ENCODE measurements at regions of chr12 and their contacts with region 1.

Region 1: GRCh38 chr12:107317751-107318613 is 224.6 kb upstream of the CRY1 start:
- DNase-seq: peak; percentile 93
- ATAC-seq: peak; percentile 66
- H3K4me3 Mint-ChIP-seq: peak overlapping the region; percentile 86
- H3K27ac Mint-ChIP-seq: no peak overlapping the region
- H3K4me1 Mint-ChIP-seq: peaks cover 27% of the 10 kb centered on the region
- H3K27me3 Mint-ChIP-seq: peaks cover 2% of the 10 kb centered on the region

Region 2: DNA sequence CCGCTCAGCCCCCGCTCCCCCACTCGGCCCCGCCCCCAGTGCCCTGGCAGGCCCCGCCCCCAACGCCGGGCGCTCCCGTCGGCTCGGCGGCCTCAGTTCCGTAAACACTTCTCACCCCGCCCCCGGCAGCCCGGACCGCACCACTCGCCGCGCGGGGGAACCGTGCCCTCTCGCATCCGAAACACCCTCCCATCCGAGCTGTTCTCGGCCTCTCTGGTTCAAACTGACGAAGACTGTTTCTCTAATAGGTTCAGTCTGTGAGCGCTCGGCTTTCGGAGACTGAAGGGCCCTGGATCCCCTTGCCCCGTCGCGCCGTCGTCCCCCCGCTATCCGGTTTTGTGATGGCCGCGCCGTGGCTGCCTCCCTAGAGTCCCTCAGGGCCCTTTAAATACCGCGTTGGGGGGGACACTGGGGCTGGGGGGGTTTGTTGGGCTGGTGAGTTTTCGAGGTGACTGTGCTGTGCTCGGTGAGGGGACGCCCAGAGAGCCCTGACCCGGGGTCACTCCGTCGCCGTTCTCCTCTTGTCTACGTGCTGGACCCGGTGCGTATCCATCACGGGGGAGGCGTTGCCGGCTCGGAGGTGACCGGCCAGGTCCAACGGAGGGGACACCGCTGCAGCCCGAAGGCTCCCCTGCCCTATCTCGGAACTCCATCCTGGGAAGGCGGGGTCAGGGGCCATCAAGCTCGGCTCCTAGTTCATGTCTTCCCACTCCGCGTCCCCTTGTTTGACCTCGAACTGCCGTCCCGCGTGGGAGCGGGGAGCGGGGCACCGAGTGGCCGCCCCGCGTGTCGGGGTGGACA is 1015.4 kb before region 1 on chr12 and contains the start of gene TCP11L2:
- CTCF ChIA-PET with region 1: no interaction called
- POLR2A ChIA-PET with region 1: no interaction called
- intact Hi-C with region 1: loop called in 1 of 2 experiments (anchors 2 kb)
- DNase-seq: peak; percentile 94
- ATAC-seq: peak; percentile 67
- H3K4me3 Mint-ChIP-seq: peak within 1 kb of the TSS; percentile 78
- H3K27ac Mint-ChIP-seq: peak within 1 kb of the TSS; percentile 99
- H3K4me1 Mint-ChIP-seq: peaks cover 59% of the 10 kb centered on the region
- H3K27me3 Mint-ChIP-seq: no peaks in the 10 kb centered on the region
- total RNA-seq, gene TCP11L2: 8.6 to 11.8 TPM

Region 3: DNA sequence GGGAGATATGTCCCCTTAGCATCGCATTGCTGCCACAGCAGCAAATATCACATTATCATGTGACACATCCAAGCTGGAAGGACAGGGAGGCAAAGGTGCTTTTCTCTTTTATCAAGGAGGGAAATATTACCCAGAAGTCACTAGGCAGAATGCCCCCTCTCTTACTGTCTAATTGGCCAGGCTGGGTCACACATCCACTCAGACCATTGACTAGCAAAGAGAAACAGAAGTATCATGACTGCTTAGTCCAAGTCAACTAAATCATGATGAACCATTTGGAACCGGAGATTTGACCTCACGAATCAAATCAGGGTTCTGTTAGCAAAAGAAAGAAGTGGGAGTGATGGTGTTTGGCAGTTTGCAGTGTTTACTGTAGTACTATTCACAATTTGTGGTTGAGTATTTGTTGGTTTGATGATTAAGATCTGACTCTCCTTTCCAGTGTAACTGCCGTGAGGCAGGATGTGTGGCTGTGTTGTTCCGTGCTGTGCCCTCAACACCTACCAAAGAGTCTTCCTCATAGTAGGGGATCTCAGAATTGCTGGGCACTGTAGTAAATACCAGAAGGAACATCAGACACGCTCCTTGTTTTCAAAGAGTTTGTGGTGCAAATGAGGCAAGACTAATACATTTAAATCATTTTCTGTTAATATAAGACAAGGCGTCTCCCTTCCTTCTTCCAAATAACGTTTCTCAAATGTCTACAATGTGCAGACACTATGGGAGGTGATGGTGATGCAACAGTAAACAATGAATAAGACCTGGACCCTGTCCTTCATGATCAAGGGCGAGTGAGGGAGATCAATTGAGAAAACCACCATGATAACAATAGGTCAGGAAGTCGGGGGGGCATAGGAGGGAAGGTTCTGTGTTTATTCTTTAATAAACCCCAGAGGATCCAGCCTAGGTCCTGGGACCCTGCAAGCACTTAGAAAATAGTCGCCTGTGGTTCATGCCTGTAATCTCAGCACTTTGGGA is 30.3 kb before region 1 on chr12:
- CTCF ChIA-PET with region 1: no interaction called
- POLR2A ChIA-PET with region 1: no interaction called
- intact Hi-C with region 1: loop called (anchors 2 kb)
- DNase-seq: peak; percentile 65
- ATAC-seq: peak; percentile 97
- H3K4me3 Mint-ChIP-seq: no peak overlapping the region
- H3K27ac Mint-ChIP-seq: peak overlapping the region; percentile 61
- H3K4me1 Mint-ChIP-seq: peaks cover 8% of the 10 kb centered on the region
- H3K27me3 Mint-ChIP-seq: no peaks in the 10 kb centered on the region

Region 4: GRCh38 chr12:107352347-107353081 is 34.5 kb after region 1 on chr12:
- CTCF ChIA-PET with region 1: interaction called, 5 read pairs
- POLR2A ChIA-PET with region 1: no interaction called
- intact Hi-C with region 1: loop called in 1 of 2 experiments (anchors 1 kb)
- DNase-seq: peak; percentile 56
- ATAC-seq: peak; percentile 83
- H3K4me3 Mint-ChIP-seq: peak overlapping the region; percentile 45
- H3K27ac Mint-ChIP-seq: peak overlapping the region; percentile 79
- H3K4me1 Mint-ChIP-seq: peaks cover 54% of the 10 kb centered on the region
- H3K27me3 Mint-ChIP-seq: no peaks in the 10 kb centered on the region

Region 5: DNA sequence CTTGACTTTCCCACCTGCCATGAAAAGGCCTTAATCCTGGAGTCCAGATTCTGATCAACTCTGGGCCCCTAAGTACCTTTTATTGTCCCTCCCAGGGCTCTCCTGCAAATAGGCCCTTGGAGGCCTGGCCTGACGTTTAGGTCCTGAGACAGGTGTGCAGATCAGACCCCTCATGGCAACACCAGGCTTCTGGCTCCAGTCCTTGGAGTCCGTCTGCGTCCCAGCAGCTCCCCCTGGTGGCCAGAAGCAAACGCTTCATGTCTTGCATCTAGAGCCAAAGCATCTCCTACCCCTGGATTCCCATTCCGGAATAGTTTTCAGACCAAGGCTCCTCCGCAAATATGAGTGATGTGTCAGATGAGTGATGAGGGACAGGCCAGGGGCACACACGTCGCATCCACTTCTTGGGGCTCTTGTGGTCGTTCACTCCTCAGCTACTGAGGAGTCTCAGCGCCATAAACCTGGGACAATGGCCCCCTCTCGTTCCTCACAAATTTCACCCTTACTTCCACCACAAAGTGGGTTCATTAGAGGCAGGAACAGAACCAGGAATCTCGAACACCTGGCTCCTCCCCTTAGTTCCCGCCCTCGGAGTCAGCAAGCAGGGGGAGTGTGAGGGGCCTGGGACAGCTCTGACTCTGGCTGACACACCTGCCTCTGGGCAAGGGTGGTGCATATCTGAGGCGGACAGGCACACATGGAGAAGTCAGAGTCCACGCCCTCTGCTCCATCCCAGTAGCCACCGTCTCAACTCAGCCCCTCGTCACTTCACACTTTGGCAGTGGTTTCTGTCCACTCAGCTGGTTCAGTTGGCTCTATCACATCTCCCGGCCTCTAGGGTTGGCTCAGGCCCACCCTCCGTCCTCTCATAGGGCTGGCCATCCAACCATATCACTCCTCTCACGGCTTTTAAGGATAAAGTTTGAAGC is 289.7 kb after region 1 on chr12:
- CTCF ChIA-PET with region 1: no interaction called
- POLR2A ChIA-PET with region 1: no interaction called
- intact Hi-C with region 1: loop called (anchors 1 kb)
- DNase-seq: peak; percentile 89
- ATAC-seq: peak; percentile 60
- H3K4me3 Mint-ChIP-seq: no peak overlapping the region
- H3K27ac Mint-ChIP-seq: no peak overlapping the region
- H3K4me1 Mint-ChIP-seq: no peaks in the 10 kb centered on the region
- H3K27me3 Mint-ChIP-seq: no peaks in the 10 kb centered on the region

Region 6: DNA sequence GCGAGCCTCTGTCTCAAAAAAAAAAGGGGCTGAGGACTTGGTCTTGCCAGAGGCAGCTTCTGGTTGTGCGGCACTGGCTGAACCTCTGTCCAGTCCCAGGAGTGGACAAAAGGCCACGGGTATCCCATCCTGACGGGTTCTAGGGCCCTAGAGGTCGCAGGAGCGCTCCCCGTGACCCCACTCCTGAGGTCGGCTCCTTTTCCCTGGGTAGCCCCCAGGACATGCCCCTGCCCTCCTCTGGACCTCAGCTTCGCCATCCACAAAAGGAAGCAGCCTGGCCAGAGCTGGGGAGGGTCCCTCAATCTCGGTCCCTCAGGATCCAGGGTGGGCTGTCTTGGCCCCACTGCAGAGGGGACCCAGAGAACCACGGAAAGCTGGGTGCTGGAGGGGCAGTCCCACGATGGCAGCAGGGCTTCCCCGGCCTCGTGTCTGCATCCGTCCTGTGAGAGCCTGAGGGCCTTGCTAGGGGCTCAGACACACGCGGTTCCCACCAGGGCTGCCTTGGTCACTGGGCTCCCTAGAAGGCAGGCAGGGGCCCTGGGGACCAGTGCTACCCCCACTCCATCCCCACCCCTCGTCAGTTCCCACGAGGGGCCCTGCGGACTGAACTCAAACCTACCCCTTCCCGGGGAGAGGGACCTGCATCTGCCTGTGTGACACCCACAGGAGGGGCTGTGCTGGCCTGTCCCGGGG is 487.7 kb after region 1 on chr12:
- CTCF ChIA-PET with region 1: no interaction called
- POLR2A ChIA-PET with region 1: no interaction called
- intact Hi-C with region 1: no loop called
- DNase-seq: no peak
- ATAC-seq: no peak
- H3K4me3 Mint-ChIP-seq: no peak overlapping the region
- H3K27ac Mint-ChIP-seq: no peak overlapping the region
- H3K4me1 Mint-ChIP-seq: no peaks in the 10 kb centered on the region
- H3K27me3 Mint-ChIP-seq: peaks cover 7% of the 10 kb centered on the region

Region 7: DNA sequence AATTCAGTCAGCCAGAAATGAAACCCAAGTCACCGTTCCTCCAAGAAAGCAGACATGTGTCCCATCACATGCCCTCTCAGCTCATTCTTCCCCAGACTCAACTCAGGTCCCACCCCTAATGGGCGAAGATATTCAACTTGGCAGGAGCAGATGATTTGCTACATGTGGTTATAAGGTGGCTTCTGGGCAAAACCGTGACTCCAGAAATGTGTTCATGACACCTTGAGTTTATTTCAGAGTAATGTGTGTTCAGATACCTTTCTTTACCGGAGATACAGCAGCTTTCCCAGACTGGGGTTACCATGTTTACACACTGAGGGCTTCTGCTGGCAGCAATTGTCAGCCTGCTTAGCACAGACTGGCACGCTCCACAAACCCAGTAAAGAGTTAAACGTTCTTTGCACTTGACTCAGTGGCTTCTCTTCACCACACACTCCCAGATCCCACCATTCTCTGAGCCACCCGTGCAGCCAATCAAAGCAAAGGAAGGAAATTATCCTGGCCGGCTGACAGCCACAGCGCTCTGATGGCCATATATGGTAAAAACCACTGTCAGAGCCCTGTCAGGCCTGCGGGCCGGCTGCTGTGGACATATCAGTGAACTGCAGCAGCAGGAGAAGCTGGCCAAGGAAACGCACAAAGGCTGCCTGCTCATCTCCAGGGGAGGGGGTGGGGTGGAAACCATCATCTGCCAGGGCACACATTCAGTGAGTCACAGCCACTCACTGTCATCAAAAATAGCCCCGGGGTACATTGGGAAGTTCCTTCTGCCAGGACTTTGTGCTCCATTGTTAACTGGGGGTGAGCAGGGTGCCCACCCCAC is 1373.4 kb after region 1 on chr12:
- CTCF ChIA-PET with region 1: no interaction called
- POLR2A ChIA-PET with region 1: no interaction called
- intact Hi-C with region 1: loop called in 1 of 2 experiments (anchors 10 kb)
- DNase-seq: peak; percentile 92
- ATAC-seq: peak; percentile 63
- H3K4me3 Mint-ChIP-seq: peak overlapping the region; percentile 67
- H3K27ac Mint-ChIP-seq: peak overlapping the region; percentile 96
- H3K4me1 Mint-ChIP-seq: peaks cover 80% of the 10 kb centered on the region
- H3K27me3 Mint-ChIP-seq: no peaks in the 10 kb centered on the region

Measured in activated CD4-positive, alpha-beta T cell treated with anti-CD3 and anti-CD28 coated beads for 36 hours (primary cell).